ENCODE measurements at regions of chrX and their contacts with region 1.

Region 1: GRCh38 chrX:115147220-115147619 is 42.0 kb upstream of the RBMXL3 start:
- DNase-seq: no peak
- H3K4me3 ChIP-seq: no peak overlapping the region
- H3K27ac ChIP-seq: no peak overlapping the region
- H3K4me1 ChIP-seq: no peaks in the 10 kb centered on the region
- H3K27me3 ChIP-seq: no peaks in the 10 kb centered on the region
- CTCF ChIP-seq: peak; percentile 30

Region 2: DNA sequence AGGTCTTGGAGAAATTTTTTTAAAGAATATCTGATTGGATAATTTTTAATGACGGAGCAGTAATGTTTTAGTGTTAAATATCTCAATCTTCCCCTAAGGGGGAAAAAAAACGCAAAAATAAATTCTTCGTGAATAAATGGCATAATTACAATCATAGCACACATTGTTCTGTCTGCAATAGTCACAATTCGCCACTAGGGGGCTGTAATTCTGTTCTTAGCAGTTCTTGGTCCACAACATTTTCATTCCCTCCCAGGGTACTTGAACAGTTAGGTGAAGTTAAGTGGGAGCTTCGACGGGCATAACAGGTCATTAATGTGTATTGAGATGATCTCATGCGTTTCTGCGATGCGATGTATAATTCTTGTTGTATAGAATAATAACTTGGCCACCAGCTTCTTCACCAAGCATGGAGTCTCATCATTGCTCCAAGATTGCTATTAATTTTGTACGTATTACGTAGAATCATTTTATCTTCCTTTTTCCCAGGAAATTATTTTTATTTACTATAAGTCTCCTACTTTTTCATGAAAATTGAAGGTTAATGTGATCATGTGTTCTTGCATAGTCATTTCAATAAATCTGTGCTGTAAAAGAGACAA is 536.1 kb before region 1 on chrX:
- intact Hi-C with region 1: loop called (anchors 5 kb)
- DNase-seq: peak; percentile 38
- H3K4me3 ChIP-seq: no peak overlapping the region
- H3K27ac ChIP-seq: no peak overlapping the region
- H3K4me1 ChIP-seq: no peaks in the 10 kb centered on the region
- H3K27me3 ChIP-seq: no peaks in the 10 kb centered on the region
- CTCF ChIP-seq: peak; percentile 88